Activated CD4-positive, alpha-beta T cell treated with anti-CD3 and anti-CD28 coated beads, Interleukin-2, amount 10 ng/mL, durations not matched to agents 24 days and 14 days (primary cell): ENCODE measurements at regions of chr2 and their contacts with region 1.

Region 1: DNA sequence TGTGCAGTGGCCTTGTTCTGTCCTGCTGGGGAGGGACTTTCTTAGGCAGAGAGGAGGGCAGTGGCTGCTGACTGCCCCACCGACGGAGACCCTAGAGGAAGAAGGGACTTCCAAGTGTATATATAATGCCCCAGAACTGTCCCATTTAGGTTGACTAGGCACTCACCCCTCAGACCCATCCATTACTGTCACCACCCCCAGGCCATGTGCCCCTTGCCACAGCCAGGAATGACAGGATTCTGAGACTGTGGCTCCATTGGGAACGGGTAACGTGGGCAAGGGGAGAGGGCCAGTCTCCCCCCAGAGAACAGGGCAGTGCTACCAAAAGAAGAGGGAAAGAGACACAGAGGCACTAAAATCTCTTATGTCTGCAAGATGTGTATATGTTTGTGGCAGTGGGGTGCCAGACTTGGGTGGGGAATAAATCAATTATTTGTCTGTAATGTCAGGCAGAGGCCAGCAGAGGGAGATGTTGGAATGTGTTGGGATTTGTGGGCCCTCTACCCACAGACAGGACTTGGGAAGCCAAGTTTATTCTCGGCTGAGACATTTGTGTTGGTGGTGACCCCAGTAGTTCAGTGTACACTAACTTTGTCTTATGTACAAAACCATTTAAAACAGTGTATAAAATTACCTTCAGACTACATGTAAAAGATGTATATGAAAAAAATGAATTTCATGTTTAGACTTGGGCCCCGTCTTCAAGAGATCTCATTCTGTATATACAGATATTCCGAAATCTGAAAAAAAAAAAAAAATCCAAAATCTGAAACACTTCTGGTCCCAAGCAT is 24.0 kb upstream of the TMEM37 start:
- DNase-seq: peak; percentile 76
- H3K4me3 Mint-ChIP-seq: no peak overlapping the region
- H3K27ac Mint-ChIP-seq: no peak overlapping the region
- H3K4me1 Mint-ChIP-seq: no peaks in the 10 kb centered on the region
- H3K27me3 Mint-ChIP-seq: peaks cover 12% of the 10 kb centered on the region

Region 2: DNA sequence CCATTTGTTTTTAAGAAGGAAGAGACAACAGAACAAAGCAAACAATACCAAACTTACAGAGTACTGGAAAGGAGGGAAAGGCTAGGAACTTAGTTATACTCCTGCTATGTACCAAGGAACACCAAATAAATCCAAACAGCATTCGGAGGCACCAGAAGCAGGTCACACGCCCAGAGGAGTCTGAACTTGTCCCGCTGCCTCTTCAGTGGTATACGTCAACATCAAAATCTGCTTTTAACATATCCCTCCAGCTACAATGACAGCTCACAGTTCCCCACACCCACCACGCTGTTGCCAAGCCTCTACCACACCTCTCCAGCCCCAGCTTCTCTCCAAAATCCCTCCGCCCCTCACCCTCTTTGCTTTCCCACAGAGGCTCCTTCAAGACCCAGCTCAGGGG is 58.3 kb before region 1 on chr2:
- intact Hi-C with region 1: no loop called
- DNase-seq: no peak
- H3K4me3 Mint-ChIP-seq: no peak overlapping the region
- H3K27ac Mint-ChIP-seq: no peak overlapping the region
- H3K4me1 Mint-ChIP-seq: no peaks in the 10 kb centered on the region
- H3K27me3 Mint-ChIP-seq: peaks cover 3% of the 10 kb centered on the region

Region 3: DNA sequence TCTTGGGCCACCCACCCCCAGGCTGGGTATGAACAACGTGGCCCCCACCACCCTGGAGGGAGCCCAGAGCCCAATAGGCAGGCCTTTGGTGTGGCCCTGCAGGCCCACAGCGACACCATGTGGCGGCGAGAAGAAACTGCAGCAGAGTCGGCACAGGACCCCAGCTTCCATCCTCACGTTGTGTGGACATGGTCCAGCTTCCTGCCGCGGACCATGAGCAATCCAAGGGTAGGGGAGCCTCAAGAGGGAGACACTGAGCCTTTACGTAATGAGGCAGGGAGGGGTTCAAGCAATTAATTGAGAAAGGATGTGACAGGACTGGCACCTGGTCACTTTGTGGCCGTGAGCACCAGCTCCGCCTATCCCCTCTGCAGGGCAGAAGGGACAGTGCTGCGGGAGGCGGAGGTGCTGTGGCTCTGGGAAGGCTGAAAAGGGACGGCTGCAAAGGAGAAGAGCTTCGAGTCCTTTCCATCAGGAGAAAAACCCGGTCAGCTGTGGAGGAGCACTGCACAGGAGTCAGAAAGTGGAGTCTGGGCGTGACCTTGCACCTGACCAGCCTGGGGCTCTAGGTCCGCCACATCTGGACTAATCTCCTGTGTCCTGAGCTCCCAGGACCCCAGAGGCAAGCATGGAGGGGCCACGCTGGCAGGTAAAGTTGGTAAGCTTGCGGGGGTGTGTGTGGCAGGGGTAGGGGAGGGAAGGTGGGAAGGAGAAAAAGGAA is 68.8 kb after region 1 on chr2:
- intact Hi-C with region 1: loop called (anchors 1 kb)
- DNase-seq: peak; percentile 79
- H3K4me3 Mint-ChIP-seq: no peak overlapping the region
- H3K27ac Mint-ChIP-seq: no peak overlapping the region
- H3K4me1 Mint-ChIP-seq: no peaks in the 10 kb centered on the region
- H3K27me3 Mint-ChIP-seq: no peaks in the 10 kb centered on the region

Region 4: DNA sequence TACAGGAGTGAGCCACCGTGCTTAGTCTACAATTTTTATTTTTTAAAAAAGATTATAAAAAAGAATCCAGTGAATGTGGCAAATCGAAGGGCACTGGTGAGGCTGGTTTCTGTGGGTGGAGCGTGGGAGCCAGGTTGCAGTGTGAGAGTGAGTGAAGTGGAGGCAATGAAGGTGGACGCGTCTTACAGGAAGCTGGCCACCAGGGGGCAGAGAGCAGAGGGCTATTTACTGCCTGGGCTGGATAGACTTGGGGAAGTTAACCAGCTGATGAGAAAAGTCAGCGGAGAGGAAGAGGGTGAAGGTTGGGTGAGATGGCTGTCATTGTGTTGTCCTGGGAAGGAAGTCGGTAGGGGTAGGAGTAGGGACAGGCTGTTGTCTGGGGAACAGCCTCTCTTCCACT is 109.8 kb after region 1 on chr2:
- intact Hi-C with region 1: no loop called
- DNase-seq: peak; percentile 79
- H3K4me3 Mint-ChIP-seq: no peak overlapping the region
- H3K27ac Mint-ChIP-seq: no peak overlapping the region
- H3K4me1 Mint-ChIP-seq: no peaks in the 10 kb centered on the region
- H3K27me3 Mint-ChIP-seq: peaks cover 2% of the 10 kb centered on the region